ENCODE measurements at regions of chr6 and their contacts with region 1.

Region 1: GRCh38 chr6:158231551-158232315 is 63.6 kb downstream of the GTF2H5 start:
- DNase-seq: peak; percentile 61 to 97 (median 74)

Region 2: DNA sequence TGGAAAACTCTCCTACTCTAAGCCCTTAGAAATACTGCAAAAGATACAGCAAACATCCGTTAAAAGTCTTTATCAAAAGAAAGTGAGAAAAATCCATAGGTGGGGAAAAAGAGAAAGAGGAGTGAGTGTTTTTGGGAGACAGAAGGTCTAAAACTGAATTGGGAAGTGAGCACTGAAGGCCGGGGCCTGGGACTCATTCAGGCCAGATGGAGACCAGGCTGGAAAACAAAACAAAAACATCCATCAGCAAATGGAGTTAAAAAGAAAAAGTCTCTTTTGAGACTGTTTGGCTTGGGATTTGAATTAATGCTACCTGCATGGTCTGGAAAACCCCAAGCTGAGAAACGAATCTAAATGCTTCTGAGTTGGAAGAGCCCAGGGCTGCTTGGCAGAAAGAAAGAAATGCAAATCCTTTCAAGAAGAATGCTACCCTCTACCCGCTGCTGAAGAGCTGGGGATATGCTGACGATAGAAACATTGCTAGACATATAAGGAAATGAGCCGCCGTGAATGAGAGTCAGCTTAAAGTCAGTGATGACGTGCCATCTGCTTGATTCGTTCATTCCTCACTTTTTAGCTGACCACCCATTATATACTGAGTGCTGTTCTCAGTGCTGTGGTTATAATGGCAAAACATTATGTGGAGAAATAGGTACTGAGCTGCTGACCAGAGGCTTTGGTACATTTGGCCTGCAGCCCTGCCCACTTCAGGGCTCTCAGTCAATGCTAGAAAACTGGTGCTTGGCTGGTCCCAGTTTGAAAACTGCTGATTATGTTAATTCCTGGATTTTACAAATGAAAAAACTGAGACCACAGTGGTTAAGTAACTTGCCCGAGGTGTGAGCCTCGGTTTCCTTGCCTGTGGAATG is 52.5 kb after region 1 on chr6:
- intact Hi-C with region 1: loop called (anchors 2 kb)
- DNase-seq: peak in 2 of 10 donors; percentile 14 to 31

Region 3: GRCh38 chr6:158408552-158409130 is 176.9 kb after region 1 on chr6:
- intact Hi-C with region 1: loop called (anchors 5 kb)
- DNase-seq: peak; percentile 23 to 93 (median 60)

Measured in posterior cingulate gyrus (tissue), 11 donors.